ENCODE measurements at regions of chr12 and their contacts with region 1.

Region 1: GRCh38 chr12:64544371-64545080 is 65.8 kb upstream of the RASSF3 start:
- DNase-seq: no peak
- ATAC-seq: peak in 1 of 2 experiments; percentile 48; a peak in 2 of 6 replicates
- H3K4me3 ChIP-seq: no peak overlapping the region
- H3K27ac ChIP-seq: no peak overlapping the region
- H3K4me1 ChIP-seq: no peaks in the 10 kb centered on the region
- CTCF ChIP-seq: no peak
- EP300 ChIP-seq: no peak
- POLR2A ChIP-seq: no peak
- RAD21 ChIP-seq: no peak

Region 2: DNA sequence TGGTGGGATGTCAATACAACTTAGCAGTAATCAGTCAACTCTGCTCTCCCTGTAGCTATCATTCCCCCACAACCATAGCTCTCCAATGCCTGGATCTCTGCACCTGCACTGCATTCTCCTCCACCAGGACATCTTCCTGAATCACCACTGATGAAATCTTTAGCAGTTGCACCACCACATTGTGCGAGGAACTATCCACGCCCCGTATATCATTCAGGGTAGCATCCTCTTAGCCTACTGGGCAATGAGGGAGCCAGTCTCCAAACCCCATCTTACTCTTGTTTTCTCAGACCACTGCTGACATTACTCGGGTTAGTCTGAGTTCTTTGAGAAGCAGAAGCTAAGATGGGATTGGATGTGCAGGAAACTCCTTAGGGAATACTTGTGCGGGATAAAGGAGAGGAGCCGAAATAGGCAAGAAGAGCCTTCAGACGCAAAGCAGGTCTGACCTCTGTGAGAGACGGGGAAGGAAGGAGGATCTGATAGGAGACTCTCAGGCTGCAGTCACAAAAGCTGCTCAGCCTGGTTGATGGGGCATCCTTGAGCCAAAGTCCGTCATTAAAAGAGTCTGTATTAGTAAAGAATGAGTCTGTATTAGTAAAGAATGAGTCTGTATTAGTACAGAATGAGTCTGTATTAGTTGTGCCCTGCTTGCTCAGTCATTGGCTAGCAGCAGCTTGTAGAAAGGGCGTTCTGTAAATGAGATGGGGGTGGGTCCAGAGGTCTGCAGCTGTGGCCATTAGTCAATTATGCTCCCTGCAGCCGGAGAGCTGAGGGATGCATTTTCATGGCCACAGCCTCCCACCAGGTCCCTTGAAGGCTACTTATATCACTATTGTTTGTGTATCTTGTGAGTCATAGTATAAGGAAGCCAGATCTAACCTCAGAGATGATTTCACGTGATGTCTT is 16.1 kb after region 1 on chr12:
- CTCF ChIA-PET with region 1: interaction called, 85 read pairs
- POLR2A ChIA-PET with region 1: interaction called, 10 read pairs
- DNase-seq: peak; percentile 61 to 67
- ATAC-seq: peak; percentile 92 to 93
- H3K4me3 ChIP-seq: no peak overlapping the region
- H3K27ac ChIP-seq: peak overlapping the region in 1 of 2 experiments; percentile 23; a peak in 2 of 6 replicates
- H3K4me1 ChIP-seq: peaks cover 19% of the 10 kb centered on the region
- CTCF ChIP-seq: no peak
- EP300 ChIP-seq: no peak
- POLR2A ChIP-seq: no peak
- RAD21 ChIP-seq: no peak

Measured in A549 (cell line).